CD4-positive, alpha-beta memory T cell (primary cell): ENCODE measurements at regions of chr12 and their contacts with region 1.

Region 1: GRCh38 chr12:66269757-66270383 is 32.4 kb upstream of the HELB start:
- DNase-seq: peak in 4 of 5 donors; percentile 51 to 59 (median 54)
- H3K4me3 ChIP-seq: no peak overlapping the region
- H3K4me3 Mint-ChIP-seq: no peak overlapping the region
- H3K27ac ChIP-seq: no peak overlapping the region
- H3K27ac Mint-ChIP-seq: no peak overlapping the region
- H3K4me1 ChIP-seq: peaks cover 13% of the 10 kb centered on the region
- H3K4me1 Mint-ChIP-seq: peaks cover 1 to 10% (median 4%) of the 10 kb centered on the region in 4 donors
- H3K27me3 ChIP-seq: no peaks in the 10 kb centered on the region
- H3K27me3 Mint-ChIP-seq: no peaks in the 10 kb centered on the region

Region 2: DNA sequence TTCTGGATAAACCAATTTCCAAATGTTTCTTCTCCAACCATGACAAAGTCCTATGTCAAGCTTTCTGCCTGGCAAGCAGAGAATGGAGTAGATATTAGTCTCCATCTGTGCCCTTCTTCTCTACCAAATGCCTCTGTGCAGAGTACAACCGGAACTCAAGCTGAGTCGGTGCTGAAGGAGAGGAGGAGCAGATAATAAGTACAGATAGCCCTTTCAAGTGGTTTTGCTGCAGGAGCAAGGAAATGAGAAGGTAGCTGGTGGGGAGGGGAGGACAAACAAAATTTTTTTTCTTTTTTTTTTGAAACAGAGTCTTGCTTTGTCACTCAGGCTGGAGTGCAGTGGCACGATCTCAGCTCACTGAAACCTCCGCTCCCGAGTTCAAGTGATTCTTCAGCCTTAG is 18.3 kb after region 1 on chr12:
- CTCF ChIA-PET with region 1: interaction called, 20 read pairs
- POLR2A ChIA-PET with region 1: interaction called, 3 read pairs
- intact Hi-C with region 1: loop called (anchors 2 kb)
- DNase-seq: peak; percentile 86 to 92 (median 89)
- H3K4me3 ChIP-seq: peak overlapping the region; percentile 21 to 35
- H3K4me3 Mint-ChIP-seq: peak overlapping the region; percentile 36 to 79 (median 70)
- H3K27ac ChIP-seq: peak overlapping the region; percentile 35
- H3K27ac Mint-ChIP-seq: peak overlapping the region; percentile 61 to 94 (median 85)
- H3K4me1 ChIP-seq: peaks cover 100% of the 10 kb centered on the region
- H3K4me1 Mint-ChIP-seq: peaks cover 72 to 96% (median 83%) of the 10 kb centered on the region in 4 donors
- H3K27me3 ChIP-seq: no peaks in the 10 kb centered on the region
- H3K27me3 Mint-ChIP-seq: no peaks in the 10 kb centered on the region

Region 3: GRCh38 chr12:66329941-66330340 is 60.1 kb after region 1 on chr12:
- CTCF ChIA-PET with region 1: interaction called, 3 read pairs
- POLR2A ChIA-PET with region 1: no interaction called
- intact Hi-C with region 1: loop called (anchors 10 kb)
- DNase-seq: no peak
- H3K4me3 ChIP-seq: no peak overlapping the region
- H3K4me3 Mint-ChIP-seq: no peak overlapping the region
- H3K27ac ChIP-seq: no peak overlapping the region
- H3K27ac Mint-ChIP-seq: no peak overlapping the region
- H3K4me1 ChIP-seq: no peaks in the 10 kb centered on the region
- H3K4me1 Mint-ChIP-seq: peaks cover 34 to 62% (median 41%) of the 10 kb centered on the region in 4 donors
- H3K27me3 ChIP-seq: no peaks in the 10 kb centered on the region
- H3K27me3 Mint-ChIP-seq: no peaks in the 10 kb centered on the region

Region 4: DNA sequence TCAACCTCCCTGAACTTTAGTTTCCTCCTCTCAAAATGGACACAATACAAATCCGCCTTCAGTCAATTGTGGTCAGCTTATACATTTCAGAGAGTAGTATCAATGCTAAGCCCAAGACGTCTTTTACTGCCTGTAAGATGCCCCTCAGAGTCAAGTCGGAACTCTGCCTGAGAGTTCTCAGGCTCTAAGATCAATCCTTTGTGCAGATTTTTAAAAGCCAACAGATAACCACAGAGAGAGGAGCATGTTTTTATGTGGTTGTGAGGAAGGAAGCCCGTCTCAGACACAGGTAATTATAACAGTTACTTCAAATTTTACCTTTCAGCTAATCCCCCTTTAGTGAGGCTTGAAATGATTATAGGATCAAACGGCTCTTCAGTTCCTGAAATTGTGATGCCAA is 124.0 kb after region 1 on chr12:
- CTCF ChIA-PET with region 1: interaction called, 445 read pairs
- POLR2A ChIA-PET with region 1: no interaction called
- intact Hi-C with region 1: no loop called
- DNase-seq: peak in 4 of 5 donors; percentile 18 to 29 (median 26)
- H3K4me3 ChIP-seq: no peak overlapping the region
- H3K4me3 Mint-ChIP-seq: peak overlapping the region in 6 of 8 donors; percentile 27 to 76 (median 53)
- H3K27ac ChIP-seq: no peak overlapping the region
- H3K27ac Mint-ChIP-seq: no peak overlapping the region
- H3K4me1 ChIP-seq: peaks cover 18% of the 10 kb centered on the region
- H3K4me1 Mint-ChIP-seq: peaks cover 14 to 31% (median 20%) of the 10 kb centered on the region in 4 donors
- H3K27me3 ChIP-seq: no peaks in the 10 kb centered on the region
- H3K27me3 Mint-ChIP-seq: peaks cover 0 to 6% of the 10 kb centered on the region in 2 donors

Region 5: DNA sequence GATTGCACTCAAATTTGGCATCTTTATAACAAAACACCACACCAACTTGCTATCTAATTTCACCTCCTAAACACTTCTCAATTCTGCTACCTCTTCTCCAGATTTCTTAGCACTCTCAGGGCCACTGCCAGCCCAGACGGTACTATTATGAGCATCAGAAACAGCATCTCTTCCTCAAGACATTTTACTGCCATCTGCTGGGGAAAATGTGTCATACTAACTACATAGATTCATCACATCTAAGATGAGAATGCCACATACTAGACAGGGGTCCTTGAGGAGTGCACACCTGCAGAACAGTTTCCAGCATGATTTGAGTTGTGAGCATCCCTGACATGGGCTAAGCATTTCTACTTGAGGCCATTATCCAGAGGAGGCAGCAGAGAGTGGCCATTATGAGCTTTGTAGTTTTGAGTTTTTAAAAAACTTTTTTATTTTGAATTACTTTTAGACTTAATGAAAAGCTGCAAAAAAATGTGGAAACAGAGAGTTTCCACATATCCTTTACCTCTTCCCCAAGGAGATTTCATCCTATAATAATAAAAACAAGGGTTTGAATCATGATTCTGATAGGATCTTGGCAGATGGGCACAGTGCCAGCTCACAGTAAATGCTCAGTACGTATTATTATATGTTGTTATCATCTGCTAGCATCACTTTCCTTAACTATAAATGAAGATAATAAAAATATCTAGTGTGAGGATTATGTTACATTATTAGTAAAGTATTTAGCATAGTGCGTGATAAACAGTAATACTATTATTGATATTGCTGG is 424.2 kb after region 1 on chr12:
- CTCF ChIA-PET with region 1: interaction called, 65 read pairs
- POLR2A ChIA-PET with region 1: no interaction called
- intact Hi-C with region 1: loop called (anchors 1 kb)
- DNase-seq: peak in 4 of 5 donors; percentile 33 to 48 (median 36)
- H3K4me3 ChIP-seq: no peak overlapping the region
- H3K4me3 Mint-ChIP-seq: no peak overlapping the region
- H3K27ac ChIP-seq: no peak overlapping the region
- H3K27ac Mint-ChIP-seq: no peak overlapping the region
- H3K4me1 ChIP-seq: no peaks in the 10 kb centered on the region
- H3K4me1 Mint-ChIP-seq: peaks cover 0 to 1% (median 0%) of the 10 kb centered on the region in 4 donors
- H3K27me3 ChIP-seq: no peaks in the 10 kb centered on the region
- H3K27me3 Mint-ChIP-seq: peaks cover 5 to 6% of the 10 kb centered on the region in 2 donors